B cell (primary cell): ENCODE measurements at regions of chr10 and their contacts with region 1.

Region 1: GRCh38 chr10:79286318-79286951 is 60.8 kb upstream of the PPIF start:
- DNase-seq: peak; percentile 93
- ATAC-seq: peak; percentile 92
- H3K4me3 ChIP-seq: peak overlapping the region in 4 of 5 experiments; percentile 1 to 40 (median 23)
- H3K4me3 Mint-ChIP-seq: peak overlapping the region; percentile 84
- H3K27ac ChIP-seq: peak overlapping the region; percentile 80 to 88
- H3K27ac Mint-ChIP-seq: peak overlapping the region; percentile 97
- H3K4me1 ChIP-seq: peaks cover 52 to 66% of the 10 kb centered on the region in 2 donors
- H3K4me1 Mint-ChIP-seq: peaks cover 79% of the 10 kb centered on the region
- H3K27me3 ChIP-seq: no peaks in the 10 kb centered on the region
- H3K27me3 Mint-ChIP-seq: no peaks in the 10 kb centered on the region
- CTCF ChIP-seq: no peak

Region 2: DNA sequence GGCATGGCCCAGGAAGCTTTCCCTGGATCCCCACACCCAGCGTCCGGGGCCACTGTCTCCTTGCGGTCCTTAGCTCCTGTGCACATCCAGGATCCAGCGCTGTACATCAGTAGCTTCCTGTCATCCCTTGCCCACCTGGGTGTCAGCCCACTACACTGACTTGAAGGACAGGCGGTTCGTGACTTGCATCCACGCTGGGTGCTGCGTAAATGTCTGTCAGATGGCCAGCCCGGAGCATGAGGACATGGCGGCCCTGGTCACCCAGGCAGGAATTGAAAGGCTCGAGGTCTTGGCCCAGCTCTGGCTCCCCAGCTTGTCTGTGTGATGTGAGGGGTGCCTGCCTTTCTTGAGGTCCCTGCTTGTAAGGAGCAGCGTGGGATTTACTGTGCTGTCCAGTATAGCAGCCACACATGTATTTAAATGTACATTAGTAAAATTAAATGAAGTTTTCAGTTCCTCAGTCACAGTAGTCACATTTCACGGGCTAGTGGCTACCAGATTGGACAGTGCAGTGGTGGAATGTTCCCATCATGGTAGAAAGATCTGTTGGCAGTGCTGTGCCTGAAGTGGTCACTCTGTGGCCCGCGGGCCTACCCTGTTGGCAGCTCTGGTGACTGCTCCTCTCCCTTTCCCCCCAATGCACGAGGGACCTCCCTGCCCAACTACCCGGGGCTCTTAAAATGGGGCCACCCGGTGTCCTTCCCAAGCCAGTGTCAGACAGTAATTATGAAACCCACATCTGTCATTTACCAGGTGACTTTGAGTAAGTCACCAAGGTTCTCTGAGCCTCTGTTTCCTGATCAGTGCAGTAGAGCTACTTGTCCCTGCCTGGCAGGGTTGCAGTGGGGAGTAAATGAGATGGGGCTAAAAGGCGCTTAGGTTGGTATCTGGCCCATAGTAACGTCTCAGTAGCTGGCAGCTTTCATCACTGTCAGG is 37.0 kb before region 1 on chr10:
- CTCF ChIA-PET with region 1: interaction called, 6 read pairs
- POLR2A ChIA-PET with region 1: interaction called, 13 read pairs
- intact Hi-C with region 1: loop called (anchors 1 kb)
- DNase-seq: peak; percentile 70
- ATAC-seq: peak; percentile 28
- H3K4me3 ChIP-seq: peak overlapping the region in 2 of 5 experiments; percentile 30
- H3K4me3 Mint-ChIP-seq: peak overlapping the region; percentile 84
- H3K27ac ChIP-seq: peak overlapping the region; percentile 93 to 95
- H3K27ac Mint-ChIP-seq: peak overlapping the region; percentile 95
- H3K4me1 ChIP-seq: peaks cover 99 to 100% of the 10 kb centered on the region in 2 donors
- H3K4me1 Mint-ChIP-seq: peaks cover 99% of the 10 kb centered on the region
- H3K27me3 ChIP-seq: no peaks in the 10 kb centered on the region
- H3K27me3 Mint-ChIP-seq: no peaks in the 10 kb centered on the region
- CTCF ChIP-seq: no peak

Region 3: DNA sequence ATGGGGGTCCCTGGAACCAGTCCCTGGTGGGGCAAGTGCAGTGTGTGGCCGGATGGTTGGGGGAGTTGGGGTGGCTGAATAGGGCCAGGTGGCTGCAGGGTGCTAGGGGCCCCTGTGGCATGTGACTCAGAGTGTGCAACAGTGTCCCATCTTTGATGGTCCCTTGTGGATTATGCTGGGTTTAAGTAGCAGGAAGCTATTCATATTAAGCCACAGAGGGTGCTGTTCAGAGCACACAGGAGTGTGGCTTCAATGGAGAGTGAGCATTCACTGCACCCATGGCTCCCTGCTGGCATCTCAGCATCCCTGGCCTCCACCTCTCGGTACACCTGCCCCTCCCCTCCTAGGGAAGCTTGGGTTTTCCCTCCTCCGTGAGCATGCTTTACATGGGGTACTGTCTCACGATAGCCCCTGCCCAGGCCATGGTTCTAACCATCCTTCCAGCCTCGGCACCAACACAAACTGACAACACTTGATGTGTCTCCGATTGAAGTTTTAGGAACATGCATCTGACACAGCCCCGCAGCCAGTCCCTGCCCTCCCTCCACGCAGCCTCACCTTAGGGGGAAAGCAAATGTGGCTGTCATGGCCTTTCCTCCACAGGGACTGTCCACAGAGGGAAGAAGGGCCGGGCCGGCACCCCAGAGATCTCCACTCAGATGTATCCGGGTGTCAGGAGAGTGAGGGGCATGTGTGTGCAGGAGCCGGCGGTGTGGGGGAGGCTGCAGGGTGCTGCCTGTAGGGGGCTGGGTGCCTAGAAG is 30.4 kb after region 1 on chr10:
- CTCF ChIA-PET with region 1: interaction called, 4 read pairs
- POLR2A ChIA-PET with region 1: interaction called, 14 read pairs
- intact Hi-C with region 1: loop called (anchors 2 kb)
- DNase-seq: peak; percentile 33
- ATAC-seq: peak; percentile 78
- H3K4me3 ChIP-seq: no peak overlapping the region
- H3K4me3 Mint-ChIP-seq: peak overlapping the region; percentile 73
- H3K27ac ChIP-seq: no peak overlapping the region
- H3K27ac Mint-ChIP-seq: peak overlapping the region; percentile 51
- H3K4me1 ChIP-seq: peaks cover 17 to 21% of the 10 kb centered on the region in 2 donors
- H3K4me1 Mint-ChIP-seq: peaks cover 33% of the 10 kb centered on the region
- H3K27me3 ChIP-seq: no peaks in the 10 kb centered on the region
- H3K27me3 Mint-ChIP-seq: no peaks in the 10 kb centered on the region
- CTCF ChIP-seq: no peak

Region 4: GRCh38 chr10:79347226-79347893 is 60.9 kb after region 1 on chr10 and contains the start of gene PPIF:
- CTCF ChIA-PET with region 1: interaction called, 3 read pairs
- POLR2A ChIA-PET with region 1: interaction called, 4 read pairs
- intact Hi-C with region 1: loop called (anchors 1 kb)
- DNase-seq: peak; percentile 95
- ATAC-seq: peak; percentile 97
- H3K4me3 ChIP-seq: peak within 1 kb of the TSS; percentile 9 to 89 (median 69)
- H3K4me3 Mint-ChIP-seq: peak within 1 kb of the TSS; percentile 88
- H3K27ac ChIP-seq: peak within 1 kb of the TSS; percentile 84 to 92
- H3K27ac Mint-ChIP-seq: peak within 1 kb of the TSS; percentile 93
- H3K4me1 ChIP-seq: peaks cover 14 to 26% of the 10 kb centered on the region in 2 donors
- H3K4me1 Mint-ChIP-seq: peaks cover 27% of the 10 kb centered on the region
- H3K27me3 ChIP-seq: no peaks in the 10 kb centered on the region
- H3K27me3 Mint-ChIP-seq: no peaks in the 10 kb centered on the region
- CTCF ChIP-seq: peak; percentile 90
- total RNA-seq, gene PPIF: 50.4 and 50.7 TPM in 2 replicates

Region 5: DNA sequence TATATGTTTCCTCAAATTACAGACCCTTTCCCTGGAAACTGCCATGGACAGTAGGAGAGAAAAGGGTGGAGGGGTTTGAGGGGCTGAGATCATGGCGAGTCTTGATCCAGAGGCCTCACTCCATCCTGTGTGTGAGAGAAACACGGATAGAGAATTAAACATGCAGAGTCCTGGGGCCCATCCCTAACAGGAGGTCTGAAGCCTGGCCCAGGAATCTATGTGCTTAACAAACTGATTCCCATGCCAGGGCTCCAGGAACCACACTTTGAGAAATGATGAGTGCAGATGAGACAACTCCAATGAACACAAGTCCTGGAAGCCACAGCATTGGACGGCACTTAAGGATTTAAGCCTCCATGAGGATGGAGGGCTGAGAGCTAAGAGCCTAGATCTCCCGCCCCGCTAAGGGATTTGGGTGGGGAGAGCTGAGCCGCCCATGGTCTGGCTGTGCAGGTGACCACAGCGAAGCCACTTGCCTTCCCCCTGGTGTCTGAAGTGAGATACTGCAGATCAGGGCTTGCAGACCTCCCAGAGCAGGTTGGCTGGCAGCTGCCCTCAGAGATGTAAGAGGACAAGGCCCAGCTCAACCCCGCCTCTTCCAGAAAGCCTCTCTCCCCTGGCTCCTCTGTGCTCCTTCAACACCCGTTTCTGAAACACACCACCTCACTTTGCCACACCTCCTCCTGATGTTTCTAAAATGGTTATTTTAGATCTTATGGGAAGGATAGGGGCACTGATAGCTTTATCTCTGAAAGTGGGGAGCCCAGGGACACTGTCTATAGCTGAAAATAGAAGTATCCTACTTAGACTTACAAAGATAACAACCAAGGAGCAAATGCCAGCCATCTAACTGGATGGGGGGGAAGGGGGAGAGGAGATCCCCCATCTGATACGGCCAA is 201.1 kb after region 1 on chr10:
- CTCF ChIA-PET with region 1: no interaction called
- POLR2A ChIA-PET with region 1: no interaction called
- intact Hi-C with region 1: no loop called
- DNase-seq: peak; percentile 58
- ATAC-seq: peak; percentile 65
- H3K4me3 ChIP-seq: no peak overlapping the region
- H3K4me3 Mint-ChIP-seq: no peak overlapping the region
- H3K27ac ChIP-seq: no peak overlapping the region
- H3K27ac Mint-ChIP-seq: no peak overlapping the region
- H3K4me1 ChIP-seq: no peaks in the 10 kb centered on the region
- H3K4me1 Mint-ChIP-seq: no peaks in the 10 kb centered on the region
- H3K27me3 ChIP-seq: no peaks in the 10 kb centered on the region
- H3K27me3 Mint-ChIP-seq: peaks cover 7% of the 10 kb centered on the region
- CTCF ChIP-seq: peak; percentile 67

Region 6: DNA sequence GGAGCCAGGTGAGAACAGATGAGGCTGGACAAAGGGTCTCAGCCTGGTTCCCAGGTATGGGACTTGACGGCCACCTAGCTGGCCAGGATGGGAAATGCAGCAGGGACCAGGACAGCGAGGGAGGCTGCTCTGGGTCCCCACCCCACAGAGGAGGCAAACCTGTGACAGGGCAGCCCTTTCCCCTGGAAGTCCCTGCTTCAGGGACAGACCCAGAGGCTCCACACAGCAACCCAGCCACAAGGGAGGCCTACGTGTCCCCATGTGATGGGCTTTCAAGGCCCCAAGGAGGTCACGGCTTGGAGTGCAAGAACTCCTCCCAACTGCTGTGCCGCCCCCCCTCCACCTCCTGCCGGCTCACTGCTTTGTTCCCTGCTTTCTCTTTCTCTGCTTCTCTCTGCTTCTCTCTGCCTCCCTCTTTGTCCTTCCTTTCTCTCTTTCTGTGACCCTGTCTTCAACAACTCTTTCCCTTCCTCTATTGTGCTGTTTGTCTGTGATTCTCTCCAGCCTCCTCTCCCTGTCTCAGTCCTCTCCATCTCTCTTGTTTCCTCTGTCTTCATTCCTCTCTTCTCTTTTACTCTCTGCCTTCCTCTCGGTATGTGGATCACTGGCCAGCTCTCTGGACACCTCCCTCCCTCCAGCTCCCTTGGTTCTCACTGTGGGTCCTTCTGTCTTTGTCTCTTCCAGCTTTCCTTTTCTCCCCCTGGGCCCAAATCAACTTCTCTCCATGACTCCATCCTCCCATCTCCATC is 216.3 kb after region 1 on chr10:
- CTCF ChIA-PET with region 1: no interaction called
- POLR2A ChIA-PET with region 1: no interaction called
- intact Hi-C with region 1: no loop called
- DNase-seq: no peak
- ATAC-seq: no peak
- H3K4me3 ChIP-seq: no peak overlapping the region
- H3K4me3 Mint-ChIP-seq: no peak overlapping the region
- H3K27ac ChIP-seq: no peak overlapping the region
- H3K27ac Mint-ChIP-seq: no peak overlapping the region
- H3K4me1 ChIP-seq: no peaks in the 10 kb centered on the region
- H3K4me1 Mint-ChIP-seq: no peaks in the 10 kb centered on the region
- H3K27me3 ChIP-seq: no peaks in the 10 kb centered on the region
- H3K27me3 Mint-ChIP-seq: peaks cover 42% of the 10 kb centered on the region
- CTCF ChIP-seq: no peak